Right cardiac atrium (tissue), 5 donors: ENCODE measurements at regions of chr9 and their contacts with region 1.

Region 1: GRCh38 chr9:20611751-20612287 is 10.5 kb downstream of the MLLT3 start:
- DNase-seq: no peak
- ATAC-seq: peak; percentile 54 to 55
- H3K4me3 ChIP-seq: no peak overlapping the region
- H3K27ac ChIP-seq: no peak overlapping the region
- H3K4me1 ChIP-seq: no peaks in the 10 kb centered on the region
- H3K27me3 ChIP-seq: no peaks in the 10 kb centered on the region

Region 2: GRCh38 chr9:20552874-20553575 is 58.8 kb before region 1 on chr9:
- intact Hi-C with region 1: loop called in 1 of 4 experiments (anchors 10 kb)
- DNase-seq: no peak
- ATAC-seq: no peak
- H3K4me3 ChIP-seq: no peak overlapping the region
- H3K27ac ChIP-seq: no peak overlapping the region
- H3K4me1 ChIP-seq: peaks cover 4% of the 10 kb centered on the region
- H3K27me3 ChIP-seq: no peaks in the 10 kb centered on the region

Region 3: DNA sequence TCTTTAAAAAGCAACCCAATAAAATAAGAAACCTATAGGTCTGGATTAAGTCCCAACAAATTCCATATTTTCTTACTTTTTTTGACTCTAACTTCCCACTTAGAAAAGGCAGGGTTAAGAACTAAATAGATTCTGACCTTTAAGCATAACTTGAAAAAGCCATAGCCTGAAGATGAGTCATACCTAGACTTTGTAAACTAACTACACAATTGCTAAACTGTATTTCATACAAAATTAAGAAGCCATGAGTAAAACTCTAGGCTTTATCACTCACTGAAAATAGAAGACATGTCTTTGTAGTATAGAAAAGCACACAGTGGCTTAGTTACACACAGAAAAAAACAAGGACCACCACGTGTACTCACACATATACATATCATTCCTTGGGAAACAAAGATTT is 41.1 kb before region 1 on chr9:
- intact Hi-C with region 1: no loop called
- DNase-seq: no peak
- ATAC-seq: no peak
- H3K4me3 ChIP-seq: no peak overlapping the region
- H3K27ac ChIP-seq: no peak overlapping the region
- H3K4me1 ChIP-seq: peaks cover 3% of the 10 kb centered on the region
- H3K27me3 ChIP-seq: no peaks in the 10 kb centered on the region